PC-9 (cell line): ENCODE measurements at regions of chr12 and their contacts with region 1.

Region 1: GRCh38 chr12:93699271-93700145 is 22.3 kb downstream of the CRADD start:
- DNase-seq: peak in 1 of 2 experiments; percentile 68
- H3K4me3 ChIP-seq: no peak overlapping the region
- H3K27ac ChIP-seq: no peak overlapping the region
- H3K4me1 ChIP-seq: peaks cover 11% of the 10 kb centered on the region; the same call in 1 of the 2 replicates
- H3K27me3 ChIP-seq: no peaks in the 10 kb centered on the region
- CTCF ChIP-seq: no peak

Region 2: DNA sequence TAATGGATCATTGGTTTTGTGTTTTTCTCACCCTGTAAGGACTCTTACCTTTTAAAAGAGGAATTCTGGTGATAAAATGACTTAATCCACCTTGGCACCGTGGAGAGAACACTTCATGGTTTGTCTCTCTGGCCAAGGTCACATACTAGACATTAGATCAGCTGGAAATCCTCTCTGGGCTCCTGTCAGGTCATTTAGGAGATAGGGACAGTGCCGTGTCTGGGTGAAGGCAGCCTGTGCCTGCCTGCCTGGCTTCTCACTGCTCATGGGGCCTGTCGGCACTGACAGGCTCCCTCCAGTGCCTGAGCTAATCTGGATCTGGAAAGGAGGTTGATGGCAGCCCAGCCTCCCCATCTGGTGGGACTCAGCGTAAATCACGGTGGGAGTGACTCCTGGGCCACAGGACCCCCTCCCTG is 16.7 kb before region 1 on chr12:
- CTCF ChIA-PET with region 1: no interaction called
- POLR2A ChIA-PET with region 1: no interaction called
- intact Hi-C with region 1: no loop called
- DNase-seq: no peak
- H3K4me3 ChIP-seq: no peak overlapping the region
- H3K27ac ChIP-seq: no peak overlapping the region
- H3K4me1 ChIP-seq: no peaks in the 10 kb centered on the region
- H3K27me3 ChIP-seq: no peaks in the 10 kb centered on the region
- CTCF ChIP-seq: no peak

Region 3: GRCh38 chr12:93868771-93869170 is 169.3 kb after region 1 on chr12:
- CTCF ChIA-PET with region 1: no interaction called
- POLR2A ChIA-PET with region 1: no interaction called
- intact Hi-C with region 1: no loop called
- DNase-seq: no peak
- H3K4me3 ChIP-seq: no peak overlapping the region
- H3K27ac ChIP-seq: no peak overlapping the region
- H3K4me1 ChIP-seq: no peaks in the 10 kb centered on the region
- H3K27me3 ChIP-seq: no peaks in the 10 kb centered on the region
- CTCF ChIP-seq: no peak

Region 4: DNA sequence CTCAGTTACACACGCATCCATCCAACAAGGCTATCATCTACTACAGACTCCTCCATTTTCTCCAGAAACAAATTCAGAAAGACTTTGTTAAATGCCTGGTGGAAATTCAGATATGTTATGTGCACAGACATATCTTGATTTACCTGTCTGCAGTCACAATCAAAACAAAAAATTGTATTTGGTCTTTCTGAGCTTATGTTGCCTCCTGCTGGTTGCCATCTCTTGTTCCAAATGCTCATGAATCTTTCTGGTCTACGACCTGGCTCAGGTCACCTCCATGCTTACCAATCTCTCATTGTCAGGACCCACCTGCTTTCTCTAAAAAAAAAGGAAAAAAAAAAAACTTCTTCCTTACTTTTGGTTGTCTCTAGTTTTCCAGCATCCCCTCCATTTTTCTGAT is 279.7 kb after region 1 on chr12:
- CTCF ChIA-PET with region 1: interaction called, 12 read pairs
- POLR2A ChIA-PET with region 1: no interaction called
- intact Hi-C with region 1: no loop called
- DNase-seq: no peak
- H3K4me3 ChIP-seq: no peak overlapping the region
- H3K27ac ChIP-seq: no peak overlapping the region
- H3K4me1 ChIP-seq: no peaks in the 10 kb centered on the region
- H3K27me3 ChIP-seq: no peaks in the 10 kb centered on the region
- CTCF ChIP-seq: peak; percentile 51